PC-3 (cell line): ENCODE measurements at regions of chr9 and their contacts with region 1.

Region 1: DNA sequence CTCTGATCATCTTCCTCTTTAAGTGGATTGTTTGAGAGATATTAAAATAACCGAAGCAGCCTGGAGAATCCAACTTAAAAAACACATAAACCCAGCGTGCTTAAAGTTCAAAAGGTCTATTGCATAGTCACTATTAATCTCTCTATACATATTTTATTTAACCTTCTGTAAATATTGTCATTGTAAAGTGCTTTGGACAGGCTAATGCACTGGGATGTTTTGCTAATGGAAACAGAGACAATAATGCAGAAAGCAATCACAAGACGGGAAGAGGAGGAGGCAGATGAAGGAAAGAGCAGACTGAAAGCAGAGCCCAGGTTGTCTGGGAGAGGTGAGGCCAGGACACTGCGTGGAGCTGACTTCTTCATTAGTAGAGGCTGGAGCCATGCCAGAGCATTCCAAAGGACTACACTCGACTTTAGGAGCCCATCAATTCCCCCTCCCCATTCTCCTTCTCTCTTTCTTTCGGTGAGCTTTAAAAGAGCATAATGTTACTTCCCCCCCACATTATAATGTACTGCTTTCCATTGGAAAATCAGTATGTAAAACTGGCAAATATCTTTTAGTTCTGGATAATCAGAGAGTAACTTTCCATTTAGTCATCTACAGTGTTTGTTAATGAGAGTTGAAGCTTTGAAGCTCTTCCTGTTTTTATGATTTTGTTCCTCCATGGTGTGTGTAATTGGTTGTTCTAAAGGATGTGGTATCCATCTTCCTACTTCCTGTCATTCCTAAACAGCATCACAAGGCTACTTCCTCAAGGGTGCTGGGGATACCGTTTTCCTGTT is 307.3 kb upstream of the MPDZ start:
- DNase-seq: no peak
- ATAC-seq: no peak
- H3K4me3 ChIP-seq: no peak overlapping the region
- H3K27ac ChIP-seq: no peak overlapping the region
- H3K4me1 ChIP-seq: 0 out of 2 replicates have a peak, but pooled peaks cover 4% of the 10 kb centered on the region
- H3K27me3 ChIP-seq: no peaks in the 10 kb centered on the region
- CTCF ChIP-seq: no peak

Region 2: DNA sequence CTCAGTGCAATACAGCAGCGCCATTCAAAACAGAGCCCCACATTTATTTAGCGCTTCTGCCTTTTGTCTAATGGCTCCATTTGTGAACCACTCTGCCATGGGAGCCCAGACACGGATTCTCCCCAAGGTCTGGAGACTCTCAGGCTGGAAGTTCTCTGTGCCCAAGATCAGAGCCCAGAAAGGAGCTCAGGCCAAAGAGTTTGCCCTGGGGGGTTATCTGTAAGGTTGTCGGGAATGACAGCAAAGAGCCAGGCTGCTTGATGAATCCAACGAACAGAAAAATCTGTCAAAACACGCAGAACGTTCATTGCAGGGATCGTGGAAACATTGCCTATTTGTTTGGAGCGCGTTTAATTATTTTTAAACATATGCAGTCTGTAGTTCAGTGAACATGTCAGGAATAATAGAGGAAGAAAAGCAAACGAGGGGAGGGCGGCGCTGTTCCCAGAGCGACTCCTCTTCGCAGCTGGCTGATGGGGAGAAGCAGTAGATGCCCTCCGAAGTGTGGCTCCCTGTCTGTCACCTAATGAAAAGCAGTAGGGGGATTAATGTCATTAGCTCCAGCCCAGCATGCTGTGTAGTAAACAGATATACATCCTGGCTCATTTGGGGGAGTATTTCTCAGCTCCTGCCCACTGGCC is 157.6 kb after region 1 on chr9:
- CTCF ChIA-PET with region 1: no interaction called
- POLR2A ChIA-PET with region 1: no interaction called
- intact Hi-C with region 1: no loop called
- DNase-seq: no peak
- ATAC-seq: no peak
- H3K4me3 ChIP-seq: no peak overlapping the region
- H3K27ac ChIP-seq: no peak overlapping the region
- H3K4me1 ChIP-seq: peaks cover under 1% of the 10 kb centered on the region
- H3K27me3 ChIP-seq: no peaks in the 10 kb centered on the region
- CTCF ChIP-seq: no peak

Region 3: DNA sequence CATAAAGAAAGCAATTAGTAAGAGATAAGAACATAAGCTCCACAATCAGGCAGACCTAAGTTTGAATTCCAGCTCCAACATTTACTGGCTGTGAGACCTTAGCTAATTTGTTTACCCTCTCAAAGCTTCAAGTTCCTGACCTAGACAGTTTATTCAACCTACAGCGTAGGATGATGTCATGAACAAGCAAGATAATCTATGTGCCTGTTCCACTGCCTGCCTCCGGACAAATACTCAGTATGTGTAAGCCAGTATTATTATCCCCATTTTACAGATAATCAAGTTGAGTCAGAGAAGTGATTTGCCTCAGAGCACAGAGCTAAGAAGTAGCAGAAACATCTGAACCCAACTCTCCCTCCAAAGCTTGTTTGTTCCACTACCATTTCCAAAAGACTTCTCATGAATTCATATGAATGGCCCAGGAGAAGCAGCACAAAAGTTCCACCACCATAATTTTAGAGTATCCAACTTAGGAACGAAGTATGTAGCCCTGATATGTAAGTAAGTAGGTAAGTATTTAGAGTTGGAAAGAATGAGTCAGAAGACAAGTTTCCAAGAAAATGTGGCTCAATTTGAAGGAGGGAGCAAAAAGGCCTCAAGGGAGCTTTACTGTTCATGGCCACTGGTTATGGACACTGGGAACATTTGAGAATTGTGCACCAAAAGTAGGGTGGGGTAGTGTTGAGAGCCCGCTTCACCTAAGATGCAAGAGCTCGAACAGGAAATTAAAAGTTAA is 329.0 kb after region 1 on chr9:
- CTCF ChIA-PET with region 1: no interaction called
- POLR2A ChIA-PET with region 1: no interaction called
- intact Hi-C with region 1: no loop called
- DNase-seq: peak; percentile 15
- ATAC-seq: no peak
- H3K4me3 ChIP-seq: no peak overlapping the region
- H3K27ac ChIP-seq: no peak overlapping the region
- H3K4me1 ChIP-seq: 0 out of 2 replicates have a peak, but pooled peaks cover 4% of the 10 kb centered on the region
- H3K27me3 ChIP-seq: no peaks in the 10 kb centered on the region
- CTCF ChIP-seq: no peak

Region 4: GRCh38 chr9:14331190-14331589 is 744.4 kb after region 1 on chr9:
- CTCF ChIA-PET with region 1: no interaction called
- POLR2A ChIA-PET with region 1: interaction called, 15 read pairs
- intact Hi-C with region 1: no loop called
- DNase-seq: no peak
- ATAC-seq: no peak
- H3K4me3 ChIP-seq: no peak overlapping the region
- H3K27ac ChIP-seq: no peak overlapping the region
- H3K4me1 ChIP-seq: peaks cover 11% of the 10 kb centered on the region
- H3K27me3 ChIP-seq: no peaks in the 10 kb centered on the region
- CTCF ChIP-seq: no peak